Naive thymus-derived CD4-positive, alpha-beta T cell (primary cell): ENCODE measurements at regions of chr13 and their contacts with region 1.

Region 1: GRCh38 chr13:40992678-40993518 is 26.2 kb downstream of the ELF1 start:
- DNase-seq: peak in 1 of 9 donors; percentile 52
- ATAC-seq: peak; percentile 50
- H3K4me3 ChIP-seq: no peak overlapping the region
- H3K4me3 Mint-ChIP-seq: peak overlapping the region; percentile 12 to 57 (median 46)
- H3K27ac ChIP-seq: peak overlapping the region; percentile 57
- H3K27ac Mint-ChIP-seq: peak overlapping the region; percentile 54 to 94 (median 87)
- H3K4me1 ChIP-seq: peaks cover 48 to 64% of the 10 kb centered on the region in 2 donors
- H3K4me1 Mint-ChIP-seq: peaks cover 58 to 98% (median 91%) of the 10 kb centered on the region in 7 donors
- H3K27me3 ChIP-seq: no peaks in the 10 kb centered on the region
- H3K27me3 Mint-ChIP-seq: no peaks in the 10 kb centered on the region

Region 2: DNA sequence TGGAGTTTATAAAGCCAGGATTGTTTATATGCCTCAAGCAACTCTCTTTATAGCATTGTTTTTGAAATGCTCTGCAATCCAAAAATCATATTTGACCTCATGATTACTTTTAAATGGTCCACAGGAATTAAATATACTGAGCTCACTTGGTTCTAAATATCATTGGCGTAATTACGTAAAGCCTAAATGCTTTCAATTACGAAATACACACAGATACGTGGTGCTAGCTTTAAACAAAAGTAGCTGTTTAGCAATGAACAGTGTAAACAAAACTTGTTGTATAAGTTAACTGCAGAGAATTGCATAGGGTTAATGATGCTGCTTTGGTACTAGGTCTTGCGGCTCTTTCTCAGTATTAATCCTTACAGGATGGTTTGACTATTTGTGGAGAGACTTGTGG is 990.9 kb before region 1 on chr13:
- CTCF ChIA-PET with region 1: no interaction called
- POLR2A ChIA-PET with region 1: no interaction called
- intact Hi-C with region 1: no loop called
- DNase-seq: no peak
- ATAC-seq: no peak
- H3K4me3 ChIP-seq: no peak overlapping the region
- H3K4me3 Mint-ChIP-seq: no peak overlapping the region
- H3K27ac ChIP-seq: no peak overlapping the region
- H3K27ac Mint-ChIP-seq: no peak overlapping the region
- H3K4me1 ChIP-seq: peaks cover 0 to 22% of the 10 kb centered on the region in 2 donors
- H3K4me1 Mint-ChIP-seq: peaks cover 11 to 28% (median 26%) of the 10 kb centered on the region in 7 donors
- H3K27me3 ChIP-seq: no peaks in the 10 kb centered on the region
- H3K27me3 Mint-ChIP-seq: peaks cover 0 to 15% (median 0%) of the 10 kb centered on the region in 5 donors

Region 3: GRCh38 chr13:40974460-40975407 is 18.2 kb before region 1 on chr13:
- CTCF ChIA-PET with region 1: interaction called, 6 read pairs
- POLR2A ChIA-PET with region 1: interaction called, 8 read pairs
- intact Hi-C with region 1: loop called (anchors 1 kb)
- DNase-seq: peak in 7 of 9 donors; percentile 43 to 66 (median 52)
- ATAC-seq: peak; percentile 88
- H3K4me3 ChIP-seq: no peak overlapping the region
- H3K4me3 Mint-ChIP-seq: peak overlapping the region; percentile 68 to 94 (median 82)
- H3K27ac ChIP-seq: peak overlapping the region; percentile 86
- H3K27ac Mint-ChIP-seq: peak overlapping the region; percentile 64 to 97 (median 82)
- H3K4me1 ChIP-seq: peaks cover 75 to 80% of the 10 kb centered on the region in 2 donors
- H3K4me1 Mint-ChIP-seq: peaks cover 75 to 99% (median 95%) of the 10 kb centered on the region in 7 donors
- H3K27me3 ChIP-seq: no peaks in the 10 kb centered on the region
- H3K27me3 Mint-ChIP-seq: no peaks in the 10 kb centered on the region

Region 4: DNA sequence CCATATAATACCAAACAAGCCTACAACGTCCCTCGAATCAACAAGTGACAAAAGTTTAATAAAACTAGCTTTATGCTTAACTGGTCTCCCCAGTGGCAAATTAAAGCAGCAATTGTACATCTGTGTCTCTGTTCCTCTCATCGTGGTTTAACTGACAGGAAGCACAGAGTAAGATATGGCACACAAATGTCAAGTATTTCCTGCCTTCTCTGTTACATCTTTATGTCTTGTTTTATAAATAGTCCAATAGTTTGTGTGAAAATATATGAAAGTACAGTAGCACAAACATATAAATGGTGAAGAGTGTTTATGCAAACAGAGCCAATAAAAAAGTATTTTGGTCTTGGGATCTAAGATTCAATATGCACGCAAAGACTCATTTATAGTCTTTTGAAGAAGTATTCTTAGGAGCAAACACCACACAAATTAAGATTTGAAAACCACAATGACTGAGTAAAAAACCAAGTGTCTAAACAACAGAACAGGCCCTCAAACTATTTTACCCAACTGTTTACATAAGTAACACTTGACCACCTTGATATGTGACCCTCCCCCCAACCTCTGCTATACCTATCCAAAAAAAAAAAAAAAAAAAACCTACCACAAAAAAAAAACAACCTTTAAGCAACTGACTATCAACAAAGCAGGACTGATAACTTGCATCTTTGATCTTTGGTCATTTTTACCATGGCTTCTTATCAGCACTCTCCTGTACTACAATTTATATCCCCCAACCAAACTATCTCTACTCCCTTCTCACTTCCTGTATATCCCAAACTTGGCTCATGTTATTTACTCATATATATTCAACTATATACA is 12.2 kb after region 1 on chr13:
- CTCF ChIA-PET with region 1: interaction called, 5 read pairs
- POLR2A ChIA-PET with region 1: interaction called, 10 read pairs
- intact Hi-C with region 1: loop called (anchors 1 kb)
- DNase-seq: peak in 7 of 9 donors; percentile 52 to 74 (median 65)
- ATAC-seq: peak; percentile 90
- H3K4me3 ChIP-seq: peak overlapping the region; percentile 6
- H3K4me3 Mint-ChIP-seq: peak overlapping the region; percentile 4 to 87 (median 69)
- H3K27ac ChIP-seq: peak overlapping the region; percentile 67
- H3K27ac Mint-ChIP-seq: peak overlapping the region; percentile 58 to 89 (median 88)
- H3K4me1 ChIP-seq: peaks cover 61 to 62% of the 10 kb centered on the region in 2 donors
- H3K4me1 Mint-ChIP-seq: peaks cover 51 to 92% (median 82%) of the 10 kb centered on the region in 7 donors
- H3K27me3 ChIP-seq: no peaks in the 10 kb centered on the region
- H3K27me3 Mint-ChIP-seq: no peaks in the 10 kb centered on the region

Region 5: GRCh38 chr13:41013835-41014234 is 20.9 kb after region 1 on chr13:
- CTCF ChIA-PET with region 1: interaction called, 5 read pairs
- POLR2A ChIA-PET with region 1: interaction called, 10 read pairs
- intact Hi-C with region 1: no loop called
- DNase-seq: no peak
- ATAC-seq: no peak
- H3K4me3 ChIP-seq: peak overlapping the region; percentile 10
- H3K4me3 Mint-ChIP-seq: peak overlapping the region; percentile 64 to 94 (median 88)
- H3K27ac ChIP-seq: peak overlapping the region; percentile 72
- H3K27ac Mint-ChIP-seq: peak overlapping the region; percentile 26 to 97 (median 92)
- H3K4me1 ChIP-seq: peaks cover 21 to 42% of the 10 kb centered on the region in 2 donors
- H3K4me1 Mint-ChIP-seq: peaks cover 43 to 67% (median 59%) of the 10 kb centered on the region in 7 donors
- H3K27me3 ChIP-seq: no peaks in the 10 kb centered on the region
- H3K27me3 Mint-ChIP-seq: no peaks in the 10 kb centered on the region